HAP-1 (cell line): ENCODE measurements at regions of chr22 and their contacts with region 1.

Region 1: DNA sequence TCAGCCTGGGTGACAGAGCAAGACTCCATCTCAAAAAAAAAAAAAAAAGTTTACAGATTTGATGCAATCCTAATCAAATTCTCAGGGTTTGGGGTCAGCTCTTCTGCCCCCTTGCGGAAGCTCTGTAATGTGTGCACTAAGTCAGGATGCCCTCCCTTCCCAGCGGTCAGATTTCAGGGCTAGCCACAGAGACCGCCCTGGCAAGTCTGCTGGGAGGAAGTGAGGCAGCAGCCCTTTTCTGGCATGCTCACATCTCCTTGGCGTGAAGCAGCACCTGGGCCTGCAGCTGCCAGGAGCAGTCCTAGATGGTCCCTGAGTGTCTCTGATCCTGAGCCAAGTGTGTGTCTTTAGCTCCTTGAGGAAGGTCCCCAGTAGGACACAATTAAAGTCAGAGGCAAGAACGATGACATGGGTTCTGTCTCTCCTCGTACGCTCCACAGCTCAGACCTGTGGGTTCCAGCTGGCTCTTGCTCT is 10.9 kb upstream of the APOBEC3C start:
- DNase-seq: peak; percentile 76 to 84
- H3K4me3 ChIP-seq: no peak overlapping the region
- H3K4me1 ChIP-seq: no peaks in the 10 kb centered on the region
- H3K27me3 ChIP-seq: peaks cover 10% of the 10 kb centered on the region; the same call in 1 of the 2 replicates

Region 2: DNA sequence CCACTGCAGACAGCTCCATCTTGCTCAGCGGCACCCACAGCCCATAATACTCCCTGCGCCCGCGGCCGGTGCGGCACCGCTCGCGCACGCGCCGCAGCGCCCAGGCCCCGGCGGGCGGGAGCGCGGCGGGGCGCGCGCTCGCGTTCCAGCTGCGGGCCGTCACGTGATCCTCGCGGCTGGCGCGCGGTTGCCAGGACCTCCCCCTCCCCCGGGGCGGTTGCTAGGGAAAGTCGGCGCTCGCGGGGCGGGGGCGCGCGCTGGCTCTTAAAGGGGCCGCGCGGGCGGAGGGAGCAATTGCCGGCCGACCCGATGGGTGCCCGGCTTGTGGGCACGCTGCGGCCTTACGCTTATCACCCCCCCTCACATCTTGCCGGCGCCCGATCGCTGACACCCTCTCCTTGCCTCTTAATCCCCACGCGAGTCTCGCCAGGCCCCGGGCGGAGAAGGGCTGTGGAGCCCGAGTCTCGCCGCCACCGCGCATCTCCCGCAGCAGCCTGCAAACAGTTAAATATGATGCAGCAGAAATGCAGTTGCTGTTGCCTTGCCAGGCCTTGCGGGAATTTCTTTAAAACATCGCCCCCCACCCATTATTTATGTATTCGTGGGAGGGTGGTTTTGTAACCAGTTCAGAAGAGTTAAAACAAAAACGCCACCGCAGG is 130.9 kb before region 1 on chr22 and contains the start of gene CBX6:
- in situ Hi-C with region 1: loop called (anchors 10 kb)
- DNase-seq: peak; percentile 87 to 97
- H3K4me3 ChIP-seq: peak within 1 kb of the TSS; percentile 69
- H3K4me1 ChIP-seq: peaks cover 9% of the 10 kb centered on the region
- H3K27me3 ChIP-seq: 0 out of 2 replicates have a peak, but pooled peaks cover 3% of the 10 kb centered on the region

Region 3: DNA sequence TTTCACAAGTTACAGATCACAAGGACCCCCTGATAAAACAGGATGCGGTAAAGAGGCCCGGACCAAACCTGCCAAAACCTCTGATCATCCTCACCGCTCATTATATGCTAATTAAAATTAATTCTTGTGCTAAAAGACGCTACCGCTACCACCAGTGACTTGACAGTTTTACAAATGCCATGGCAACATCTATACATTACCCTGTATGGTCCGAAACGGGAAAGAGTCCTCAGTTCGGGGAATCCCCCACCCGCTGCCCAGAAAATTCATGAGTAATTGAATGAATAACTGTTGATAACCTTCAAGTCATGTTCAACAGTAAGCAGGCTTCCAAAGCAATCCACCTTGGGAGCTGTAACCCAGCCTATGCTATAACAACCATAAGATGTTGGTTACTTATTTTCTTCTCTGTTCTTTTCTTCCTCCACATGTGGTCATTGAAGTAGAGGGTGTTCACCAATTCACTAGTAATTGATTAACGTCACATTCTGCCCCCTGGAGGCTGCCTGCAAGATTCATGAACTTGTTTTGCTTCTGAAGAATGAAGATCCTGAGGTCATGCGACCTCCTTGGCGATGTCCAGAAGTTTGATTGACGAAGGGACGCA is 114.5 kb after region 1 on chr22:
- in situ Hi-C with region 1: loop called (anchors 5 kb)
- DNase-seq: peak; percentile 35 to 77
- H3K4me3 ChIP-seq: no peak overlapping the region
- H3K4me1 ChIP-seq: peaks cover 11% of the 10 kb centered on the region
- H3K27me3 ChIP-seq: no peaks in the 10 kb centered on the region